ENCODE measurements at regions of chr7 and their contacts with region 1.

Region 1: GRCh38 chr7:128347647-128348097 is 4.0 kb upstream of the RBM28 start:
- DNase-seq: no peak
- ATAC-seq: peak; percentile 33

Region 2: GRCh38 chr7:128121711-128122530 is 225.8 kb before region 1 on chr7:
- intact Hi-C with region 1: no loop called
- DNase-seq: peak; percentile 81
- ATAC-seq: peak; percentile 79

Region 3: DNA sequence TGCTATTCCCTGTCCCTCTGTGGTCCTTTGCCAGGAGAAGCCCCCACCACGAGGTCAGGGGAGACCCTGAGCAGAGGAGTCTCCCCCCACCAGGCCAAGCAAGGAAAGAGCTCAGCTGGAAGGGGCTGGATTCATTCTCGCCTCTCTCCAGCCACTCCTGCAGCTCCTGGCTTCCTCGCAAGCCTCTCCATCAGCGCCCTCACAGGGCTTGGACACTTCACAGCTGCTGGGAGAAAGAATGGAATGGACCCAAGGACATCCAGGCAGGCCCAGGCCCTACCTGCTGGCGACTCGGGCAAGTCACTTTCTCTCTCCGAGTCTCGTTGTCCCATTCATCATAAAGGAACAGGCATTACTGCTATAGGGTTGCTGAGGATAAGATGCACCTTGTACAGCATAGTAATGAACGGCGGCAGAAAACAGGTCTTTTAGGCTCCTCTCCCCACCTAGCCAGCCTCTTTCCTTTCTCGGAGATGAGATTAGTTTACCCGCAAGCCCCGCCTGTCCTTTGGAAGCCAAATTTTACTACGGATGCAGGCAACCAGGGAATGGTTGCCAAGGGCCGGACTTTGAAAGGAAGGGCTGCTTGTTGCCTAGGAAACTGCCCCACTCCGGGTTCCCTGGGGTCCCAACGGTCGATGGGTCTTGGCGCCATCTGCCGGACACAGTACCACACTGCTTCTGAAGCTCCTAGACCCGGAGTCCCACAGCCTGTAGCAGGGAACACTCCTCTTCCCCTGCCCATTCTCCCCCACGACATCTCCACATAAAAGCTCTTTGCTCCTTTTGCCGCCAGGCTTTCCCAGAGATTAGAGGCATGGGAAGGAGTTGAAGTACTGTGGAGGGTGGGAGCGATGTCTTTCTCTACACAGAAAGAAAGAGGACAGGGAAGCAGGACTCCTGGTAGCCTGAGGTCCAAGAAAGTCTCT is 39.8 kb after region 1 on chr7:
- intact Hi-C with region 1: loop called (anchors 1 kb)
- DNase-seq: peak; percentile 86
- ATAC-seq: peak; percentile 92